Cardiac septum (tissue), 1 donor: ENCODE measurements at regions of chr10 and their contacts with region 1.

Region 1: DNA sequence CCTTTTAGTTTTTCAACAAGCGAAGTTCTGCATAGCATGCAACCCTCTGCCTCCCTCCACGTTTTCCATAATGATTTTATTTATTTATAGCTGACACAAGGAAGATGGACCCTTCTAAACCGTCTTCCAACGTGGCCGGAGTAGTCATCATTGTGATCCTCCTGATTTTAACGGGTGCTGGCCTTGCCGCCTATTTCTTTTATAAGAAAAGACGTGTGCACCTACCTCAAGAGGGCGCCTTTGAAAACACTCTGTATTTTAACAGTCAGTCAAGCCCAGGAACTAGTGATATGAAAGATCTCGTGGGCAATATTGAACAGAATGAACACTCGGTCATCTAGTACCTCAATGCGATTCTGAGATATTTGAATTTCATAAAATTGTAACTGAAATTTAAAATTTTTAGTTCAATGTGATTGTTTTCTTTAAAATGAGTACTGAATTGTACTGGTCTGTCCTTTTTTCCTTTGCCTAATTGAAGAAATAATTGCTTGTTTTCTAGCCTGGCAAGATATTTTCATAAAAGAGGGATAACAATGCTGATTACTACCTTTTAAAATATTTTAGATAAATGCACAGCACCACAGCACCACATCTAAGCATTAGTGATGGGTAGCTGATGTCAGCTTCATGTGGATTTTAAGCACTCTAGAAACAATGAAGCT is 41.5 kb upstream of the SLC39A12 start:
- DNase-seq: no peak

Region 2: GRCh38 chr10:18087355-18087754 is 177.1 kb after region 1 on chr10:
- intact Hi-C with region 1: loop called (anchors 10 kb)
- DNase-seq: no peak